Naive thymus-derived CD4-positive, alpha-beta T cell (primary cell): ENCODE measurements at regions of chr20 and their contacts with region 1.

Region 1: DNA sequence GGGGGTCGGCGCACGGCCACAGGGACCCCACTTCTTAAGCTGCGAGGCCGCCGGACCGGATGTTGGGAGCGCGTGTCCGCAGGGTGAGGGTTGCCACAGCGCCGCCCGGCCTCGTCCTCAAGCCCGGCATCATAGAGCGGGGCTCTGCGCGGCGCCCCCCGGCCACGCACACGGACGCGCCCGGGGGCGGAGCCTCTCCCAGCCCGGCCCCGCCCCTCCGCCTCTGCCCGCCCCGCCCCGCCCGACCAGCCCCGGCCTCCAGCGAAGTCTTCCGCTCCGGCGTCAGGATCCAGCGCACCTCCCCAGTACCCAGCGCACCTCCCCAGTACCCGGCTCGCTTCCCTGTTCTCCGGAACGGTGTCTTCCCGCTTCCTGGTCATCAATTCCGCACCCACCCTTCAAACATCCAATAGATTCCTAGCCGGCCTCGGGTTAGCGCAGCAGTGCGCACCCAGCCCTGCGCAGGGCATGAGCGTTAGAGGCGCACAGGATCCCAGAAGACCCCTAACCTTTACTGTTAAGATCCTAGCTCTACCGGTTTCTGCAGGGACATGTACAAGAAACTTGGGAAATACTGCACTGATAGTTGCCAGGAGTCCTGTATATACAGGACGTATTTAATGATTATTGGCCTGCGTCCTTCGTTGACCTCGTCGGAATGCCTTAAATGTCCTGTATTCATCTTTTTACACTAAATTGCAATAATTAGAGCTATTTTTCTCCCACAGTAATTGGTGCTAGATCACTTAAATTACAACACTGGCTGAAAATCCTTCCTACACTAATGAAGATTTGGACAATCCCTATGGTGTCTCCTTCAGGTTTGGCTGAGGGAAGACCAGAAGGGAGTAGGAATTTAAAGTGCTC is 535 bp upstream of the DNAAF9 start:
- DNase-seq: peak; percentile 53 to 74 (median 68)
- ATAC-seq: peak; percentile 80
- H3K4me3 ChIP-seq: peak overlapping the region; percentile 90
- H3K4me3 Mint-ChIP-seq: peak overlapping the region; percentile 94 to 100 (median 97)
- H3K27ac ChIP-seq: peak overlapping the region; percentile 70
- H3K27ac Mint-ChIP-seq: peak overlapping the region; percentile 83 to 97 (median 92)
- H3K4me1 ChIP-seq: no peaks in the 10 kb centered on the region
- H3K4me1 Mint-ChIP-seq: peaks cover 19 to 35% (median 29%) of the 10 kb centered on the region in 7 donors
- H3K27me3 ChIP-seq: no peaks in the 10 kb centered on the region
- H3K27me3 Mint-ChIP-seq: peaks cover 0 to 37% (median 0%) of the 10 kb centered on the region in 5 donors

Region 2: DNA sequence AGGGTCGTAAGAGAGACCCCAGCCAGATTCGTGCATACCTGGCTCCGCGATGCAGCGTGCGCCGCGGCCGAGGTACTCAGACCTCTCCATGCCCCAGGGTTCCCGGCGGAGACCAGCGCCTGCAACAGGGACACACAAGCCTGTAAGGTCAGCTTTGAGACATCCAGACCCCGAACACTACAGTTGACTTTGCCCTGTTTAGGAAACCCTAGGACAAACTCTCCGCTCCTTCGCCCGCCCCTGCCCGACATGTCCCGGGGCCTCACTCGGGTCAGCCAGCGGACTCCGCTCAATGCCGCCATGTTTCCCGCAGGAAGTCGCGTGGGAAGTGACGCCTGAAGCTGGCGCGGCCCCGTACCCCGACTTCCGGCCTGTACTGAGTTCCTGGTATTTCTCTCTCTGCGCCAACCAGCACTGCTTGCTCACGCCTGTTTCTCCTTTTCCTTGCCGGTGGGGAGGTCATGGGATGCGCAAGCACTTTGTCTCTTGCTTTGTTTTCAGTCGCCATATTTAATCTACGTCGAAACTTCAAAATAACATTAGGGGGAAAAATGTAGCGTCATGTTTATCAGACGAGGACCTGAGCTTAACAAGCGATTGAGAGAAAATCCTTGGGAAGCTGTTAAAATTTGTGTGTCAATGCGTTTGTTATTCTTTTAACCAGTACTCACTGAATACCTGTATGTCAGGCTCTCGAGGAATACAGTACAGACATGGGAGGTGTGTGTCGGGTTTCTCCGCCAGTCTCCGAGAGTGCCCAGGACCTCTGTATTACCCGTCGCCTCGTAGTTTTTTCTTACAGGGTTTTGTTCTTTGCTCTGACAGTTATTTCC is 743.9 kb before region 1 on chr20 and contains the start of gene IDH3B:
- CTCF ChIA-PET with region 1: no interaction called
- POLR2A ChIA-PET with region 1: no interaction called
- intact Hi-C with region 1: loop called in 1 of 2 experiments (anchors 2 kb)
- DNase-seq: peak; percentile 76 to 94 (median 90)
- ATAC-seq: peak; percentile 99
- H3K4me3 ChIP-seq: peak within 1 kb of the TSS; percentile 89
- H3K4me3 Mint-ChIP-seq: peak within 1 kb of the TSS; percentile 87 to 97 (median 94)
- H3K27ac ChIP-seq: peak within 1 kb of the TSS; percentile 87
- H3K27ac Mint-ChIP-seq: peak within 1 kb of the TSS; percentile 94 to 99 (median 97)
- H3K4me1 ChIP-seq: peaks cover 10 to 15% of the 10 kb centered on the region in 2 donors
- H3K4me1 Mint-ChIP-seq: peaks cover 4 to 34% (median 29%) of the 10 kb centered on the region in 7 donors
- H3K27me3 ChIP-seq: no peaks in the 10 kb centered on the region
- H3K27me3 Mint-ChIP-seq: peaks cover 0 to 10% (median 0%) of the 10 kb centered on the region in 5 donors
- total RNA-seq, gene IDH3B: 105 to 161 (median 107) TPM

Region 3: GRCh38 chr20:3045816-3046676 is 362.0 kb before region 1 on chr20 and contains the start of gene MRPS26:
- CTCF ChIA-PET with region 1: no interaction called
- POLR2A ChIA-PET with region 1: no interaction called
- intact Hi-C with region 1: loop called in 1 of 2 experiments (anchors 1 kb)
- DNase-seq: peak; percentile 63 to 89 (median 76)
- ATAC-seq: peak; percentile 93
- H3K4me3 ChIP-seq: peak within 1 kb of the TSS; percentile 91
- H3K4me3 Mint-ChIP-seq: peak within 1 kb of the TSS; percentile 82 to 95 (median 92)
- H3K27ac ChIP-seq: peak within 1 kb of the TSS; percentile 70
- H3K27ac Mint-ChIP-seq: peak within 1 kb of the TSS; percentile 69 to 90 (median 79)
- H3K4me1 ChIP-seq: peaks cover 4 to 11% of the 10 kb centered on the region in 2 donors
- H3K4me1 Mint-ChIP-seq: peaks cover 11 to 23% (median 18%) of the 10 kb centered on the region in 7 donors
- H3K27me3 ChIP-seq: no peaks in the 10 kb centered on the region
- H3K27me3 Mint-ChIP-seq: no peaks in the 10 kb centered on the region
- total RNA-seq, gene MRPS26: 22.2 to 41.6 (median 29.5) TPM

Region 4: DNA sequence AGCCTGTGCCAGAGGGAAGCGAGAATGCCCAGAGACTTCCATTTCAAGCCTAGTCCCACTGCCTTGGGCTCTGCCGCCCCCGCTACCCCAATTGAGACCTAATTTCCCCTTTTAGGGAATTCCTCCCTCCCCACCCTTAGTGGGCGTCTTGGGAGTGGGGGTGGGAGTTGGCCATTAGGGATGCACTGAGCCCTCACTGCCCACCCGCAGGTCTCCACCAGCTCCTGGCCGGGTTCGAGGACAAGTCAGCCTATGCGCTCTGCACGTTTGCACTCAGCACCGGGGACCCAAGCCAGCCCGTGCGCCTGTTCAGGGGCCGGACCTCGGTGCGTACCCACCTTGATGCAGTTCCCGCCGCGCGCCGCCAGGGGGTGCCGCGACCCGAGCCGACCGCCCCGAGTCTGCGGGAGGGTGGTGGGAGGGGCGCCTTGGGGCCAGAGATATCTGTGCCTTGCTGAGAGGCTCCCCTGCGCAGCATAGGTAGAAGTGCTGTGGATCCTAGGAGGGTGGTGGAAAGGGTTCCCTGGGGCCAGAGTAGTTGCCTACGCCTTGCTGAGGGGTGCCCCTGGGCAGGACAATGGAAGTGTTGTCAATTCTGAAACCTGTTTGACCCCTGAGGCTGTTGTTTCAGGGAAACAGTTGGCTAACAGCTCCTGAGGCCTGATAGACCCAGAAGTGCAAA is 189.6 kb before region 1 on chr20:
- CTCF ChIA-PET with region 1: no interaction called
- POLR2A ChIA-PET with region 1: no interaction called
- intact Hi-C with region 1: loop called in 1 of 2 experiments (anchors 5 kb)
- DNase-seq: peak; percentile 59 to 82 (median 69)
- ATAC-seq: peak; percentile 89
- H3K4me3 ChIP-seq: no peak overlapping the region
- H3K4me3 Mint-ChIP-seq: peak overlapping the region in 1 of 10 donors; percentile 38
- H3K27ac ChIP-seq: no peak overlapping the region
- H3K27ac Mint-ChIP-seq: peak overlapping the region in 1 of 9 donors; percentile 65
- H3K4me1 ChIP-seq: peaks cover 0 to 15% of the 10 kb centered on the region in 2 donors
- H3K4me1 Mint-ChIP-seq: peaks cover 2 to 21% (median 16%) of the 10 kb centered on the region in 7 donors
- H3K27me3 ChIP-seq: no peaks in the 10 kb centered on the region
- H3K27me3 Mint-ChIP-seq: no peaks in the 10 kb centered on the region

Region 5: GRCh38 chr20:3470627-3471396 is 62.8 kb after region 1 on chr20 and contains the start of gene ATRN:
- CTCF ChIA-PET with region 1: no interaction called
- POLR2A ChIA-PET with region 1: interaction called, 6 read pairs
- intact Hi-C with region 1: loop called (anchors 1 kb)
- DNase-seq: peak; percentile 72 to 96 (median 80)
- ATAC-seq: peak; percentile 98
- H3K4me3 ChIP-seq: peak within 1 kb of the TSS; percentile 89
- H3K4me3 Mint-ChIP-seq: peak within 1 kb of the TSS; percentile 89 to 97 (median 96)
- H3K27ac ChIP-seq: peak within 1 kb of the TSS; percentile 79
- H3K27ac Mint-ChIP-seq: peak within 1 kb of the TSS; percentile 69 to 96 (median 86)
- H3K4me1 ChIP-seq: peaks cover 21 to 26% of the 10 kb centered on the region in 2 donors
- H3K4me1 Mint-ChIP-seq: peaks cover 26 to 43% (median 34%) of the 10 kb centered on the region in 7 donors
- H3K27me3 ChIP-seq: no peaks in the 10 kb centered on the region
- H3K27me3 Mint-ChIP-seq: peaks cover 0 to 15% (median 0%) of the 10 kb centered on the region in 5 donors
- total RNA-seq, gene ATRN: 12.4 to 17.5 (median 13.0) TPM

Region 6: DNA sequence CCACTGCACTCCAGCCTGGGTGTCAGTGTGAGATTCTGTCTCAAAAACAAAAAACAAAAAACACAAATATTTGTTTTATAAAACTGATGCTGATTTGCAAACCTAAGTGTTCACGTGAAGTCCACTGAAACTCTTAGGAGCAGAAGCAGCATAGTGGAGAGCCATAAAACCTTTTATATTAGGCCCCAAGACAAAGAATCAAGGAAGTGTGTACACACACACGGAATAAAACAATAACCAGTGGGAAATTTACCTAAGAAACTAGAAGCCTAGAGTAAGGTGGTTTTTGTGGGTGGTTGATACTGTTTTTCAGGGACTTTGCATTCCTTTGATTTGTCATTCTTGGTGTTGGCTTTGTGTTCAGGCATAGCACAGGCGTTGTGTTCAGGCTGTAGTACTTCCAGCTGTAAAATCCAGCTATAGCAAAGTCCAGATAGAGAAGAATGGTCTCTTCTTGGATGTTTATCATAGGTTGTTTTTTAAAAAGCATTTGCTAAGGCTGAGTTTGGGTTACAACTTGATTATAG is 124.1 kb after region 1 on chr20:
- CTCF ChIA-PET with region 1: no interaction called
- POLR2A ChIA-PET with region 1: no interaction called
- intact Hi-C with region 1: no loop called
- DNase-seq: no peak
- ATAC-seq: no peak
- H3K4me3 ChIP-seq: no peak overlapping the region
- H3K4me3 Mint-ChIP-seq: no peak overlapping the region
- H3K27ac ChIP-seq: no peak overlapping the region
- H3K27ac Mint-ChIP-seq: peak overlapping the region in 1 of 9 donors; percentile 41
- H3K4me1 ChIP-seq: no peaks in the 10 kb centered on the region
- H3K4me1 Mint-ChIP-seq: peaks cover 0 to 11% (median 2%) of the 10 kb centered on the region in 7 donors
- H3K27me3 ChIP-seq: no peaks in the 10 kb centered on the region
- H3K27me3 Mint-ChIP-seq: no peaks in the 10 kb centered on the region